ENCODE measurements at regions of chr15 and their contacts with region 1.

Region 1: DNA sequence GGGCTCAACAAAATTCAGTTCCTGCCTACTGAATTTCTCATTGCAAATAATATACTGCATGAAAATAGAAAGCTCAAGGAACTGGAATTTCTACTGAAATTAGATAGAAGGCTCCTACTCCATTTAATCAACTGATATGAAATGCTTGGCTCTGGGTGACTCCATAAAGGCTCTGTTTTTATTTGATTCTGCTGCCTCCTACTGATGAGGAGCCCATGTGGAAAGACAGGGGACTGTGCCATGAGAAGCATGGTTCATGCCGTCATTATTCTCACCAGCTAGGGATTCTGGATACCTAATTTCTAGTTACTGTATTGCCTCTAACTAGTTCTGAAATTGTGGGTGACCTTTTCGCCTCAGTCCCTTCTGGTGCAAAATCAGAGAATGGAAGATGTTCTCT is 366.2 kb upstream of the DPH6 start:
- DNase-seq: no peak

Region 2: GRCh38 chr15:35751413-35752133 is 160.6 kb before region 1 on chr15:
- intact Hi-C with region 1: loop called (anchors 10 kb)
- DNase-seq: no peak

Region 3: DNA sequence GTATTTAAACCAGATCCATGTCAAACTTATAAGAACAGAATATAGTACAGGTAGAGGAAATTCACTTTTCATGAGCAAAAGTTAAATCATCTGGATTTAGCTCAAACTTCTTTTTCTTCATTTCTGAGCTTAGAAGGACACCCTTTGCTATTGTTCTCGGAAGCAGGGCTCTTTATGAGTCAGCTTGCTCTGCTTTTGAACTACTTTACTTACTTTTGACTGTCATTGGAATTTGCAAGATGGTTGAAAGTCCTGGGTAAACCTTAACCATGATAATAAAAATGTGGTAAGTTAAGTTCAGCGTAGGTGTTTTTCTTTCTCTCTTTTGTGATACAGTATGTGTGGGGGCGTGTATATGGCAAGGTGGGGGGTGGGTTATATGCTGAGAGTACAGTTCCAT is 53.5 kb before region 1 on chr15:
- intact Hi-C with region 1: no loop called
- DNase-seq: no peak

Region 4: DNA sequence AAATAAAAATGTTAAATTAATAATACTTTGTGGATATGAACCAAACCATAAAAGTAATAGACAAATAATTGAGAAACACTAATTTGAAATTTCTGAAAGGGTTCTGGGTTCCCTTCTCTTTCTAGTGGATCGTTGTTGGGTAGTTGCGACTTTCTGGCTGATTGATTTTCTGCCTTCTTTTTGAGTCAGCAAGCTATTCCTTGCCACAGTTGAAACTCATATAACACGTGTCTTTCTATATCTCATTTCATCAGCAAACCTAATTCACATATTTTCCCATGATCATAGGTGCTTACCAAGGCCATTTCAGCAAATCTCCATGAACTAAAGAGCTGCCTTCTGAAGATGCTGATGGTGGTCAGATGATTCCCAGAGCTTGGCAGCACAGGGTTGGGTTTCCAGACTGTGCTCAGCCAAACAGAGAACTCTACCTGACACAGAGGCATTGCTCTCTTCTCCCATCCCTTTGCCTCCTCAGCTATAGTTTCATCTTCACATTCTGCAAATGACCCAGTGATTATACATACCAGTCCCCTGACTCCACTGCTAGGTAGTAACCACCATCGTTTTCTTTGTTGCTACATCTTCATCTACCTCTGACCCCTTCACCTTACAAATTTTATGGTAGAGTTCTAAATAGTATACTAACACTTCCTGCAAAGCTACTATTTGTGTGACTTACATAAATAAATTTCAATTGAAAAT is 17.7 kb after region 1 on chr15:
- intact Hi-C with region 1: no loop called
- DNase-seq: no peak

Region 5: GRCh38 chr15:36008719-36009118 is 96.5 kb after region 1 on chr15:
- intact Hi-C with region 1: no loop called
- DNase-seq: no peak

Measured in cardiac septum (tissue), 1 donor.